Activated T-helper 1 cell treated with anti-CD3 and anti-CD28 coated beads, Interleukin-12 subunit alpha, Interleukin-12 subunit beta, Interleukin-2, Interleukin-4 antibody, amounts not matched to agents 30 ng/mL and 10 ng/mL and 1 ng/mL, durations not matched to agents 14 hours and 24 hours and 36 hours (primary cell): ENCODE measurements at regions of chr1 and their contacts with region 1.

Region 1: GRCh38 chr1:230212405-230212936 is 145.4 kb downstream of the GALNT2 start:
- DNase-seq: no peak
- H3K4me3 Mint-ChIP-seq: peak overlapping the region; percentile 34
- H3K27ac Mint-ChIP-seq: peak overlapping the region; percentile 91
- H3K4me1 Mint-ChIP-seq: peaks cover 65% of the 10 kb centered on the region
- H3K27me3 Mint-ChIP-seq: no peaks in the 10 kb centered on the region

Region 2: GRCh38 chr1:229768217-229768616 is 444.3 kb before region 1 on chr1:
- intact Hi-C with region 1: no loop called
- DNase-seq: no peak
- H3K4me3 Mint-ChIP-seq: no peak overlapping the region
- H3K27ac Mint-ChIP-seq: no peak overlapping the region
- H3K4me1 Mint-ChIP-seq: no peaks in the 10 kb centered on the region
- H3K27me3 Mint-ChIP-seq: peaks cover 14% of the 10 kb centered on the region

Region 3: GRCh38 chr1:230066466-230067404 is 145.7 kb before region 1 on chr1 and contains the start of gene GALNT2:
- intact Hi-C with region 1: loop called (anchors 1 kb)
- DNase-seq: peak; percentile 88
- H3K4me3 Mint-ChIP-seq: peak within 1 kb of the TSS; percentile 93
- H3K27ac Mint-ChIP-seq: peak within 1 kb of the TSS; percentile 89
- H3K4me1 Mint-ChIP-seq: peaks cover 48% of the 10 kb centered on the region
- H3K27me3 Mint-ChIP-seq: peaks cover 3% of the 10 kb centered on the region
- total RNA-seq, gene GALNT2: 67.6 and 67.9 TPM in 2 replicates

Region 4: DNA sequence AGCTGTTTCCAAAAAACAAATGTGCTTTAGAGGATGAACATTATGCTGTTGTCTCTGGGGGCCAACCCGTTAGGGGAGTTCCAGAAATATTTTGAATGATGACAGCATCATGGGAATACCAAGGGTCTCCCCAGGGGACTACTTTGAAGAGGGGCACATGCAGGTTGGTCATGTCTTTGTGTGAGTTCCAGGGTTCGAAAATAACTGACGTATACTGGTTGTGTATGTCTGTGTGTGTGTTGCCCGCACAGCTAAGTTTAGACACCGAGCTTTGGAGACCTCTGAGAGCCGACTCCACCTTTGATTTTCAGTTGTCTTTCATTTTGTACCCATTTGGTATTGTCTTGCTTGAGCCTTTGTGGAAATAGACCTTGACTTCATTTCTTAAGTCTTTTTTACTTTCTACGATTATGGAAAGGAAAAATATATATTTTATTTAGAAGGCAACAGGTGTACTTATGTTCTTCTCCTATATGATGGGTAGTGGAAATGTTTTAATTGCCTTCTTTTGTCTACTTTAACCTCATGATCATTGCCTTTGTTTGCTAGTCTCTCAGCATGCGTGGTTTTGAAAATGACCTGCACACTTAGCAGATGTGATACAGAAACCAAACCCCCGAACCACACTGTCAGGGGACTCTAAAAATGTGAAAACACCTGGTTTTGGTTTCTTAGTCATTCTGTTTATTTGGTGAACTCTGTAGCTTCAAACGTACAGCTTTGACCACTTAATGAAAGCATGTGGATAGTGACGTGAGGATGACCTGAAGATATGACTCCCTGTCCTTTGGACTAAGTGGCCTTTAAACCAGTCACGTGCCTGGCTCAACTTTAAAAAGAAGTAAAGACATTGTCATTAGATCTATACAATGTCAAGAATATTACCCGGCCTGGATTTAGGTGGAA is 88.9 kb before region 1 on chr1:
- intact Hi-C with region 1: loop called (anchors 1 kb)
- DNase-seq: peak; percentile 47
- H3K4me3 Mint-ChIP-seq: peak overlapping the region; percentile 45
- H3K27ac Mint-ChIP-seq: peak overlapping the region; percentile 73
- H3K4me1 Mint-ChIP-seq: peaks cover 68% of the 10 kb centered on the region
- H3K27me3 Mint-ChIP-seq: no peaks in the 10 kb centered on the region

Region 5: GRCh38 chr1:230231774-230232145 is 19.3 kb after region 1 on chr1:
- intact Hi-C with region 1: loop called (anchors 1 kb)
- DNase-seq: no peak
- H3K4me3 Mint-ChIP-seq: no peak overlapping the region
- H3K27ac Mint-ChIP-seq: peak overlapping the region; percentile 16
- H3K4me1 Mint-ChIP-seq: peaks cover 22% of the 10 kb centered on the region
- H3K27me3 Mint-ChIP-seq: no peaks in the 10 kb centered on the region

Region 6: DNA sequence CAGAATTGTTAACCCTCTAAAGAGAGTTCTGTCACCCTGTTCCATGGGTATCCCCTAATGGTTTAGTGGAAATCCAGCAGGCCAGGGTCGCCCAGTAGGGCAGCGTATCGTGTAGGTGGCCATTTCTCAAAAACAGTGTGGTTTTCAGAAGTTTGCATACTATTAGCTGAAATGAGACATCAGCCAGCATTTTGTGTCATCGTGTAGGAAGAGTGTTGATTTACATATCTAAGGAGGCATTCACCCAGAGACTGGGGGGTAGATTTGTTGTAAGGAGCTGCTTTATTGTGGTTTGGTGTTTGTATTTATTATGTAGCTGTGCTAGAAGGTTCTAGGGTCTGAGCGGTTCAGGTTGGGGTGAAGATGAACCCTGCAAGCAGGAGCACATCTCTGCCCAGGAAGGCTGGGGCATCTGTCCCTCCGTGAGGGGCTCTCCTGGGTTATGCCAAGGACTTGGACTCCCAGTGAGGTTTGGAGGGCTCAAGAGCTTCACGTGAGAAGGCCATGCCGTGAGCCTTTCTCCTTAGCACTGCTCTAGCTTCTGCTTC is 39.2 kb after region 1 on chr1:
- intact Hi-C with region 1: loop called (anchors 2 kb)
- DNase-seq: no peak
- H3K4me3 Mint-ChIP-seq: no peak overlapping the region
- H3K27ac Mint-ChIP-seq: peak overlapping the region; percentile 76
- H3K4me1 Mint-ChIP-seq: peaks cover 18% of the 10 kb centered on the region
- H3K27me3 Mint-ChIP-seq: no peaks in the 10 kb centered on the region

Region 7: GRCh38 chr1:230303822-230304221 is 91.4 kb after region 1 on chr1:
- intact Hi-C with region 1: loop called (anchors 1 kb)
- DNase-seq: no peak
- H3K4me3 Mint-ChIP-seq: peak overlapping the region; percentile 1
- H3K27ac Mint-ChIP-seq: no peak overlapping the region
- H3K4me1 Mint-ChIP-seq: peaks cover 12% of the 10 kb centered on the region
- H3K27me3 Mint-ChIP-seq: peaks cover 3% of the 10 kb centered on the region